Uterus (tissue), 4 donors: ENCODE measurements at regions of chr18 and their contacts with region 1.

Region 1: GRCh38 chr18:23352042-23352441 is 101.0 kb upstream of the RIOK3 start:
- DNase-seq: no peak
- H3K4me3 ChIP-seq: no peak overlapping the region
- H3K27ac ChIP-seq: no peak overlapping the region
- H3K4me1 ChIP-seq: no peaks in the 10 kb centered on the region
- H3K27me3 ChIP-seq: no peaks in the 10 kb centered on the region
- CTCF ChIP-seq: no peak
- POLR2A ChIP-seq: no peak

Region 2: DNA sequence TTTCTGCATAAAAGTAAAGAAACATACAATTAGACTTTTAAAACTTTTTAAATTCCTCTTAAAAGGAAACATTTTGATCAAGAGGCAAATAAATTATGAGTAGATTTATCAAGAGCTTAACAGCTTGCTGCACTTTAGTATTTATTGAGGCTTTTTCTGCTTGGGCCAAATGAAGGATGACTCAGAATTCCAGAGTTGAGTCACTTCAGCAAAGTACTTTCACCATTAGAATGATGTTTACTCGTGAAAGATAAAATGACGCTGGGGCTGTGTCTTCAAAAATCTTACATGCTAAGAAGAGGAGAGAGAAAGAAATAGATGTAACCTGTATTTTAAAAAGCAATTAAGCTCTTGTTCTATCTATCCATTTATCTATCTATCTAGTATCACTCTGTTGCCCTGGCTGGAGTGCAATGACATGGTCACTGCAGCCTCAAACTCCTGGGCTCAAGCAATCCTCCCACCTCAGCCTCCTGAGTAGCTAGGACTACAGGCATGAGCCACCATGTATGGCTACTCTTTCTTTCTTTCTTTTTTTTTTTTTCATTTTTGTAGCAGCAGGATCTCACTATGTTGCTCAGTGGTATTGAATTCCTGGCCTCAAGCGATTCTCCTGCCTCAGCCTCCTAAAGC is 25.7 kb after region 1 on chr18:
- intact Hi-C with region 1: loop called (anchors 1 kb)
- DNase-seq: peak in 1 of 2 donors; percentile 51
- H3K4me3 ChIP-seq: no peak overlapping the region
- H3K27ac ChIP-seq: peak overlapping the region; percentile 93 to 98
- H3K4me1 ChIP-seq: peaks cover 4% of the 10 kb centered on the region in 2 donors
- H3K27me3 ChIP-seq: no peaks in the 10 kb centered on the region
- CTCF ChIP-seq: no peak
- POLR2A ChIP-seq: no peak